Cardiac septum (tissue), 1 donor: ENCODE measurements at regions of chr7 and their contacts with region 1.

Region 1: GRCh38 chr7:112995171-112995824 is 91.3 kb downstream of the GPR85 start:
- DNase-seq: no peak

Region 2: DNA sequence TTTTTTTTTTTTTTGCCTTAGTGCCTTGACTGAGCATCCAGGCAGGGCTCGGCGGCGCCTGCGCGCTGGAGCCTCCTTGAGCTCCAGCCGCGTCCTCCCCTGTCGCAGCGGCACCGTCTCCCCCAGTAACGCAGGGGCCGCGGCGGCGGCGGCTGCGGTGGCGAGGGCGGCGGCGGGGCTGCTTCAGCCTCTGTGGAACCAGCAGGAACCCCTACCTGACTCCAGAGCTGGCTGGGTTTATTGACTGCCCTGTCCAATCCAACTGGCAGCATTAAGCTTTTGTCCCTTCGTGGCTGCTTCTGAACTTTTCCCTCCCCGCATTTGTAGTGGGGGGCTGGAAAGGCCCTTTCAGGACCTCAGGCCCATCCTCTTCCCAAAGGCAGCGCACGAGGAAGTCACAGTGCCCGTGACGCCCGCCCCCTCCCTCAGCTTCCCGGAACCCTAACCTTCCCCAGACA is 91.2 kb after region 1 on chr7 and contains the start of gene GPR85:
- intact Hi-C with region 1: no loop called
- DNase-seq: no peak
- total RNA-seq, gene GPR85: 4.6 TPM

Region 3: GRCh38 chr7:113099284-113099919 is 104.1 kb after region 1 on chr7:
- intact Hi-C with region 1: no loop called
- DNase-seq: no peak

Region 4: DNA sequence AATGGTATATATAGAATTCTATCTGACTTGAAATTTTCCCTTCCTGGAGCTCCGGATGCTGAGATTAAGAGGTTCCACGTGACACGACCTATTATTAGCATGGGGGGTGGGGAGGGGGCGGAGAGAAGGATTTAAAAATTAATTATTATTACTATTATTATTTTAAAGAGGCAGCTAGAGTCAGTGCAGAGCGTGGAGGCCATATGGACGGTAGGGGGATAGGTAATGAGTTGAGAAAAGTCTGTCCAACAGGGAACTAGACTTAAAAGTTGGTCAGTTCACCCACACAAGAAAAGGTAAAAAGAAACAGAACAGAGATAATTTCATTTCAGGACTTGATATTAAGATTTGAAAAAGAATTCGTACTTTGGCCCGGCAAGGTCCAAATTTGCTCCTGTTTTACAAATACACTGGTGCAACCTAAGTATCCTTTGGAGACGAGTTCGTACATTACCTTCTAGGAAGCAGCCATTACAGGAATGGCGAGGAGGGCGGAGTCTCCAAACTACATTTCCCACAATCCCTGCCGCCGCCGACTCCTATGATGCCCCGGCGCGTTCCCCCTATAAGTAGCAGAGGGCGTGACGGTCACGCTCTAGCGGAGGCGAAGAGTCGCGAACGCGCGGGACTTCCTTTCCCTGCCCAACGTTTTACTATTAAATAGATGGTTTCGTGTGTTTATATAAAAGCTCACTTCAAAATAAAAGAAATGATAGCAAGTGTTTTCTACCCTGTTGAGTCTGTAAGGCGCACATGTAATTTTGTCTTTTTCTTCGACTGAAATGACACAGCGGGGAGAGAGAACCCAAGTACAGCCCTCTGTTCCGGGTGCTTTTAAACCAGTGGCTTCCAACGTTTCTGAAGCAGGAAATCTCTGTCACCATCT is 123.0 kb after region 1 on chr7 and contains the start of gene SMIM30:
- intact Hi-C with region 1: loop called (anchors 10 kb)
- DNase-seq: peak; percentile 95
- total RNA-seq, gene SMIM30: 127 TPM